ENCODE measurements at regions of chr19 and their contacts with region 1.

Region 1: GRCh38 chr19:47891923-47892666 is 6.0 kb upstream of the SULT2A1 start:
- DNase-seq: no peak
- H3K4me3 ChIP-seq: no peak overlapping the region
- H3K27ac ChIP-seq: no peak overlapping the region
- H3K4me1 ChIP-seq: no peaks in the 10 kb centered on the region
- H3K27me3 ChIP-seq: no peaks in the 10 kb centered on the region

Region 2: GRCh38 chr19:47994209-47994802 is 102.2 kb after region 1 on chr19 and contains the start of gene ELSPBP1:
- in situ Hi-C with region 1: loop called (anchors 25 kb)
- DNase-seq: no peak
- H3K4me3 ChIP-seq: no peak within 1 kb of the TSS
- H3K27ac ChIP-seq: no peak within 1 kb of the TSS
- H3K4me1 ChIP-seq: no peaks in the 10 kb centered on the region
- H3K27me3 ChIP-seq: peaks cover 32% of the 10 kb centered on the region; the same call in 1 of the 2 replicates
- total RNA-seq, gene ELSPBP1: not detected in 2 replicates

Measured in GM23248 (cell line).